CD8-positive, alpha-beta memory T cell (primary cell): ENCODE measurements at regions of chr19 and their contacts with region 1.

Region 1: DNA sequence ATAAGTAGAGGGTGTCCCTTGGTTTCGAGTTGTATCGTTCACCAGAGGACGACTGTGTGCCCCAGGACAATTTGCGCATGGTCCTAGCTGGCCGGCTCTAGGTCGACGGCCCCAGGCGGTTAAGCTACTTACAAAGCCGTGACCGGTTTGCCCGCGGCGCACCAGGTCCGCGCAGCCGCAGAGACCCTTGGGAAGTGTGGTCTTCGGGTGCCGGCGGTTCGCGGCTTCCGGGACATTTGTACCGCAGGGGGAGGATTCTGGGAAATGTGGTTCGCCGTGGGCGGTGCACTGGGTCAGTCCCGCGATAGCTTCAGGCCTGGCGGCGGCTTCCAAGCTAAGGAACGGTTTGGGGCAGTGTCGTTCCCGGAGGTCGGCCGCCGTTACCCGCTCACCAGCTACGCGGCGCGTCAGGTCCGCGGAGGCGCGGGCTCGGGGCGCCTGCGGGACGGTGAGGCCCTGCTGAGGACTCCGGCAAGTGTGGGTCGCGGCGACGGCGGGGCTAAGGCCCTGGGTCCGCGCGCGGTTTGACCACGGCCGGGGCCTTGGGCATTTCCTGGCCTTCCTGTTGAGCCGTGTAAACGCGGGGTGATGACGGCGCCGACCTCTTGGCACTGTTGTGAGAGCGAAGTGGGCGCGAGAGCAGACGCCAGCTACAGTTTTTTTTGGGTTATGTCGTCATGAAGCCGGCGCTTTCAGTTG is at the start of gene ZNF302:
- DNase-seq: peak; percentile 88 to 94 (median 92)
- H3K4me3 ChIP-seq: peak within 1 kb of the TSS; percentile 97
- H3K4me3 Mint-ChIP-seq: peak within 1 kb of the TSS; percentile 95 to 100 (median 99)
- H3K27ac ChIP-seq: peak within 1 kb of the TSS; percentile 78
- H3K27ac Mint-ChIP-seq: peak within 1 kb of the TSS; percentile 94 to 100 (median 99)
- H3K4me1 ChIP-seq: peaks cover 17% of the 10 kb centered on the region
- H3K4me1 Mint-ChIP-seq: peaks cover 28 to 43% (median 42%) of the 10 kb centered on the region in 3 donors
- H3K27me3 ChIP-seq: no peaks in the 10 kb centered on the region
- H3K27me3 Mint-ChIP-seq: peaks cover 11 to 28% of the 10 kb centered on the region in 2 donors
- total RNA-seq, gene ZNF302: 13.4 to 14.8 TPM

Region 2: DNA sequence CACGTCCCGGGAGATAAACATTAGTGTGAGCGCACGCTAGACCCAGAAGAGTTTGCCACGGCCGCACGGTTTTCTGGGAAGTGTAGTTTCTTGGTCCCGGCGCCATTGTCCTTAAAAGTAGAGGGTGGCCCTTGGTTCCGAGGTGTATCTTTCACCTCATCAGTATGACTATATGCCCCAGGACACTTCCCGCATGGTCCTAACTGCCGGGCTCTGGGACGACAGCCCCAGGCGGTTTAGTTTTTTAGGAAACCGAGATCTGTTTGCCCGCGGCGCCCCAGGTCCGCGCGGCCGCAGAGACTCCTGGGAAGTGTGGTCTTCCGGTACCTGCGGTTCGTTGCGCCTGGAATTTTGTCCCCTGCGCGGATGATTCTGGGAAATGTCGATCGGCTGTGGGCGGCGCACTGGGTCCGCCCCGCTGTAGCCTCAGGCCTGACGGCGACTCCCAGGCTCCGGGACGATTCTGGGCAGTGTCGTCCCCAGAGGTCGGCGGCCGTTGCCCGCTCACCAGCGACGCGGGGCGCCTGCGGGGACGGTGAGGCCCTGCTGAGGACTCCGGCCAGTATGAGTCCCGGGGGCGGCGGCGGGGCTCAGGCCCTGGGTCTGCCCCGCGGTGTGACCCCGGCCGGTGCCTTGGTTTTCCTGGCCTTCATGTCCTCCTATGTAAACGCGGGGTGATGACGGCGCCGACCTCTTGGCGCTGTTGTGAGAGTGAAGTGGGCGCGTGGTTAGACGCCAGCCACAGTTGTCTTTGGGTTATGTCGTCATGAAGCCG is 56.5 kb after region 1 on chr19 and contains the start of gene ZNF181:
- CTCF ChIA-PET with region 1: no interaction called
- POLR2A ChIA-PET with region 1: interaction called, 10 read pairs
- DNase-seq: peak; percentile 64 to 87 (median 76)
- H3K4me3 ChIP-seq: peak within 1 kb of the TSS; percentile 86
- H3K4me3 Mint-ChIP-seq: peak within 1 kb of the TSS; percentile 91 to 98 (median 96)
- H3K27ac ChIP-seq: peak within 1 kb of the TSS; percentile 91
- H3K27ac Mint-ChIP-seq: peak within 1 kb of the TSS; percentile 92 to 99 (median 97)
- H3K4me1 ChIP-seq: peaks cover 13% of the 10 kb centered on the region
- H3K4me1 Mint-ChIP-seq: peaks cover 25 to 39% (median 36%) of the 10 kb centered on the region in 3 donors
- H3K27me3 ChIP-seq: no peaks in the 10 kb centered on the region
- H3K27me3 Mint-ChIP-seq: peaks cover 4 to 7% of the 10 kb centered on the region in 2 donors
- total RNA-seq, gene ZNF181: 4.5 to 6.3 TPM

Region 3: DNA sequence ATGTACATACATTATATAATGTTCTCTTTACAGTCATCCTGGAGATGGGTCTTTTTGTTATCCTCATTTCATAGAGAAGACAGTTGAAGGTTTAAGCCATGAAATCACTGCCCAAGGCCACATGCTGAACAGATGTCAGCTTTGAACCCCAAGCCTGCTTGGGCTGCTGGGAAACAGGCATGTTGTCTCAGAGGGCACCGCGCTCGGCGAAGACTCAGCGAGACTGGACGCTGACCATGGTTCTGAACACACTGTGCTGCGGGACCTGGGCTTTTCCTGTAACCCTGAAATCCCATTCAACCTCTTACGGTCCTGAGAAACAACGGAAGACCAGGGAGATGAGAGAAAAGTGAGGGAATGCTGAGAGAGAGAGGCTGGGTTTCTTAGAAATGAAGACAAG is 1286.0 kb after region 1 on chr19:
- CTCF ChIA-PET with region 1: no interaction called
- POLR2A ChIA-PET with region 1: interaction called, 12 read pairs
- DNase-seq: no peak
- H3K4me3 ChIP-seq: no peak overlapping the region
- H3K4me3 Mint-ChIP-seq: no peak overlapping the region
- H3K27ac ChIP-seq: no peak overlapping the region
- H3K27ac Mint-ChIP-seq: no peak overlapping the region
- H3K4me1 ChIP-seq: peaks cover 15% of the 10 kb centered on the region
- H3K4me1 Mint-ChIP-seq: peaks cover 20 to 33% (median 21%) of the 10 kb centered on the region in 3 donors
- H3K27me3 ChIP-seq: no peaks in the 10 kb centered on the region
- H3K27me3 Mint-ChIP-seq: peaks cover 4% of the 10 kb centered on the region in 2 donors